Activated B cell treated with CpG ODN at 0.5 μM for 24 hours (primary cell): ENCODE measurements at regions of chr18 and their contacts with region 1.

Region 1: GRCh38 chr18:48785091-48785614 is 165.6 kb downstream of the SMAD7 start:
- DNase-seq: peak; percentile 47
- ATAC-seq: peak; percentile 91
- H3K4me3 Mint-ChIP-seq: peak overlapping the region; percentile 64
- H3K27ac Mint-ChIP-seq: peak overlapping the region; percentile 84
- H3K4me1 Mint-ChIP-seq: peaks cover 62% of the 10 kb centered on the region
- H3K27me3 Mint-ChIP-seq: no peaks in the 10 kb centered on the region
- CTCF ChIP-seq: no peak

Region 2: DNA sequence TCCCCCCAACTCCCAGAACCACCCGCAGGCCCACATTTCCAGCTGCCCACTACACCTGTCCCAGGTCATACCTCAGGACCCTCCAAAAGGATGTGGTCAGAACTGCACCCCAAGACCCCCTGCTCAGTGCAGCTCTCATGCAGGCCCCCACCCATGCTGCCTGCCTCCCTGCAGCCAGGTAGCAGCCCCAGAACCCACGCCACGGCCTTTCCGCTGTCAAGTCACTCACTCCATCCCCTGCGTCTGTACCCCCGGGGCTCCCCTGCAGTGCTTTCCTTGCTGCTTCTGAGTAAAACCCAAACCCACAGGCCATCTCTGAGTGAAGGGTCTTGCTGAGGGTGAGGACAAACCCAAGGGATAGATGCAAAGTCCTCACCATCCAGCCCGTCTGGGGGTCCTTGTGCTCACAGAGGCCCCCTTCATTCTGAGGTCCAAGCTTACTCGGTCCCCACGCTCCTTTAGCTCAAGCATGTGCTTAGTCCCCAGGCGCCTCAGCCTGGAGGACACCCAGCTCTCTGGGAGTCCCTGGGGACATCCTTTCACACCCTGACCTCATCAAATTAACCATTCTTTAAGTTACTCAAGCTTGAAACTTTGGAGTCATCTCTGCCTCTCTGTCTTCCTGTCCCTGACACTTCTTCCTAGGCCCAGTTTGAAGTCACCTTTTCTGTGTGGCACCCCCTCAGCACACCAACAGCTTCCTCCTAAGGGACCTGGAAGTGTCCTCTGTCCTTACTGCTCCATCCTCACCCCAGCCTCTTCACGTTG is 35.5 kb after region 1 on chr18:
- CTCF ChIA-PET with region 1: interaction called, 3 read pairs
- POLR2A ChIA-PET with region 1: interaction called, 3 read pairs
- intact Hi-C with region 1: loop called (anchors 1 kb)
- DNase-seq: peak; percentile 33
- ATAC-seq: peak; percentile 98
- H3K4me3 Mint-ChIP-seq: peak overlapping the region; percentile 4
- H3K27ac Mint-ChIP-seq: peak overlapping the region; percentile 32
- H3K4me1 Mint-ChIP-seq: peaks cover 18% of the 10 kb centered on the region
- H3K27me3 Mint-ChIP-seq: no peaks in the 10 kb centered on the region
- CTCF ChIP-seq: no peak

Region 3: DNA sequence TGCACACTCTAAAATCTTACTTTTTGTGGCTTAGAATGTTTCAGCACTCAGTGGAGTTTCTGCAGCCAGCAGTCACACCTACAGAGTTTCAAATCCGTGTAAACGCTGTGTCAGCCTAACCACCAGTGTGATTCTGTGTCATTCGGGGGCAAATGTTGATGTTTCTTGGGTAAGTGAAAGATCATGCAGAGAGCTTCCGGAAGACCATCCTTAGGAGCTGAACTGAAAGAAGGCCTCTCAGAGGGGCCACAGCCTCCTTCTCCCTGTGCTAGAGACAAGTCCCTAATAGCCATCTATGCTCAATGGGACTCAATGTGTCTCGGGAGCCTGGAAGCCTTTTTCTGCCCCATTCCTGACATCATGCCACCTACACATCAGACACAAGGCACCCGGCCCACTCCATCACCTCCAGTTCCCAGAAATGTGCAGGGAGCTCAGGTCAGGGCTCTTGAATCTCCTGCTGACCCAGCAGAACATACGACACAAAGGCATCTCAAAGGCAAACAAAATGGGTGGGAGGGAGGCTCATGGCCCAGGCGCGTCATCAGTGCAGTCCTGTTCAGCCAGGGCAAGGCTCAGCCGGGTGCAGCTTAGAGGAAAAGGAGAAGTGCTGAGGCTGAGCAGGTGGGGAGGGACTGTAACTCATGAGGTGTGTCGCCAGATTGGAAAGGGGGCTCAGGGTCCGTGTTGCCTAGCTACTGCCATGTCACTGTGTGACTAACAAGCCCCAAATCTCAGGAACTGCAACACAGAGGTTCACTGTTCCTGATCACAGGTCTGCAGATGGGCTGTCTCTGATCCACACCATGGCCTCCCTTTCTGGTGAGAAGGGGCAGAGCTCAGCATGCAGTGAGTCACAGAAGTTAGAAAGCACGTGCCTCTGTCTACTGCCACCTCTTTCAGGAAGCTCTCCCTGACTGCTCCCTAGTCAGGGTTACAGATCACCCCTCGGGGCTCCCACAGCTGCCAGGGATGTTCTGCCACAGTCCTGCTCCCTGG is 83.6 kb after region 1 on chr18:
- CTCF ChIA-PET with region 1: no interaction called
- POLR2A ChIA-PET with region 1: interaction called, 3 read pairs
- intact Hi-C with region 1: loop called (anchors 1 kb)
- DNase-seq: peak; percentile 44
- ATAC-seq: peak; percentile 95
- H3K4me3 Mint-ChIP-seq: peak overlapping the region; percentile 13
- H3K27ac Mint-ChIP-seq: peak overlapping the region; percentile 85
- H3K4me1 Mint-ChIP-seq: peaks cover 17% of the 10 kb centered on the region
- H3K27me3 Mint-ChIP-seq: no peaks in the 10 kb centered on the region
- CTCF ChIP-seq: no peak

Region 4: DNA sequence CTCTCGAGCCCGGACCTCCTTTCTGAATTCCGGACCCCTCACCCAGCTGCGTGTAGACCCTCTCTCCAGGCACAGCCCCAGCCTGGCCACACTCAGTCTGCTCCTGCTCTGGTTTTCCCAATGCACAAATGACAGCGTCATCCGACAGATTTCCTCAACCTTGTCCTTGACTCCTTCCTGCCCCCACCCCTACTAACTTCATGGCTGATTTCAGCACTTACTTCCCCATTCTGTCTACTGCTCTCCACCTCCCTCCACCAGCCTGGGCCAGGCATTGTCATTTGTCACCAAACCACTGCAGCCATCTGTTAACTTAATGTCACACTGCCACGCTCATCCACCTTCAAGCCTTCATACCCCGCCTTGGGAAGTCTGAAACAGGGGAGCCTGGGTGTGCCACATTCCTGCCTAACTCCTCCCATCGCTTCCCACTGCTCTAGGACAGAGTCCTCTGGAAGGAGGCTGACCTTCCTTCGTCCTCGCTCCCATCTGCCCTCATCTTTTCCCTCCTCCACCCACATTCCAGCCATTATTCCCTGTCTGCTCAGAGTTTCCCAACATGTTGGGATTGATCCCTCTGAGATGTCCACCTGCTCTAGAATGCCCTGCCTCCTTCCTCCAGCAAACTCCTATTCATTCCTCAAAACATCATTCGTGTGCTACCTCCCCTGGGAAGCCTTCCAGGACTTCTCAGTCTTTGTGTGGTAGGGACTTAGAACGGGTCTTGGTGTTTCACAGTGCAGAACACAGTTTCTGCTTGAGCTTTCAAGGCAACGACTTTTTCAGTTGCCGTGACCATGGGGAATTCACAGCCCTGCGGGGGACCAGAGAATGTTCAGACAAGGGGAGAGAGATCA is 207.8 kb after region 1 on chr18:
- CTCF ChIA-PET with region 1: no interaction called
- POLR2A ChIA-PET with region 1: no interaction called
- intact Hi-C with region 1: loop called (anchors 2 kb)
- DNase-seq: peak; percentile 45
- ATAC-seq: peak; percentile 98
- H3K4me3 Mint-ChIP-seq: peak overlapping the region; percentile 42
- H3K27ac Mint-ChIP-seq: peak overlapping the region; percentile 70
- H3K4me1 Mint-ChIP-seq: peaks cover 20% of the 10 kb centered on the region
- H3K27me3 Mint-ChIP-seq: no peaks in the 10 kb centered on the region
- CTCF ChIP-seq: no peak